ENCODE measurements at regions of chr9 and their contacts with region 1.

Region 1: GRCh38 chr9:73151653-73152542 is at the start of gene ANXA1:
- DNase-seq: peak; percentile 48
- H3K4me3 Mint-ChIP-seq: peak within 1 kb of the TSS; percentile 80
- H3K27ac Mint-ChIP-seq: peak within 1 kb of the TSS; percentile 81
- H3K4me1 Mint-ChIP-seq: peaks cover 22% of the 10 kb centered on the region
- H3K27me3 Mint-ChIP-seq: no peaks in the 10 kb centered on the region
- CTCF ChIP-seq: no peak
- total RNA-seq, gene ANXA1: 458 and 526 TPM in 2 replicates

Region 2: DNA sequence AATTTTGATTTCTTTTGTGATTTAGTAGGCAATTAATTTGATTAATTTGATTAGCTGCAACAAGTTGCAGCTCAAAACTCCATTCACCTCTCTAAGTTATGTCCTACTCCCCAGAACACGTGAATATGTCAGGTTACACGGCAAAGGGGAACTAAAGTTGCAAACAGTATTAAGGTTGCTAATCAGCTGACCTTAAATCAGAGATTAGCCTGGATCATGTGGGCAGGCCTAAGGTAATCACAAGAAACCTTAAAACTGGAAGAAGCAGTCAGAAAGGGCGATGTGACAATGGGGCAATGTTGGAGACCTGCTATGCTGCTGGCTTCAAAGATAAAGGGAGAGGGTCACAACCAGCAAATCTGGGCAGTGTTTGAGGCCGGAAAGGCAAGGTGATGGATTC is 47.6 kb before region 1 on chr9:
- CTCF ChIA-PET with region 1: interaction called, 8 read pairs
- intact Hi-C with region 1: loop called (anchors 1 kb)
- DNase-seq: no peak
- H3K4me3 Mint-ChIP-seq: no peak overlapping the region
- H3K27ac Mint-ChIP-seq: no peak overlapping the region
- H3K4me1 Mint-ChIP-seq: peaks cover 19% of the 10 kb centered on the region
- H3K27me3 Mint-ChIP-seq: no peaks in the 10 kb centered on the region
- CTCF ChIP-seq: no peak

Region 3: DNA sequence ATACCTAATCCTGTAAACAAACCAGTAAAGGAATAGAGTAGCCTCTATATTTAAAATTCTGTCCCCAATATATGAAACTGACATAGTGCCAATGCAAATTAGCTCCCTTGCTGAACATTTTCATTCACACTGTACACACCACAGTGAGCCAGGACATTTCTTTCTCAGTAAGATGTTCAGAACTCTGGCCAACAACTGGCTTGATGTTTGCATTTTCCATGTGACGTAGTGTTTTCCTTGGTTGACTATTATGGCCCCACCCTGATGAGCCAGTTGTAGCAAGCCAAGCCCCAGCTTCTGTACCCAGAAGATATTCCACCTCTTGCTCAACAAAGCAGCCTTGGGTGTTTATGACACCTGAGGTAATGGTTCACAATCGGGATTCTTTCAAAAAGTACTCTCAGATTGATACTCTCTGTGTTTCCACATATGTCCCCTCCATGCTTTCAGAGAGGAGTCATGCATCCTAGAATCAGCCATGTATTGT is 17.9 kb before region 1 on chr9:
- CTCF ChIA-PET with region 1: interaction called, 5 read pairs
- intact Hi-C with region 1: loop called (anchors 2 kb)
- DNase-seq: peak; percentile 50
- H3K4me3 Mint-ChIP-seq: no peak overlapping the region
- H3K27ac Mint-ChIP-seq: peak overlapping the region; percentile 81
- H3K4me1 Mint-ChIP-seq: peaks cover 56% of the 10 kb centered on the region
- H3K27me3 Mint-ChIP-seq: no peaks in the 10 kb centered on the region
- CTCF ChIP-seq: no peak

Measured in Calu3 (cell line).